Kidney (tissue), 22 donors: ENCODE measurements at regions of chr6 and their contacts with region 1.

Region 1: DNA sequence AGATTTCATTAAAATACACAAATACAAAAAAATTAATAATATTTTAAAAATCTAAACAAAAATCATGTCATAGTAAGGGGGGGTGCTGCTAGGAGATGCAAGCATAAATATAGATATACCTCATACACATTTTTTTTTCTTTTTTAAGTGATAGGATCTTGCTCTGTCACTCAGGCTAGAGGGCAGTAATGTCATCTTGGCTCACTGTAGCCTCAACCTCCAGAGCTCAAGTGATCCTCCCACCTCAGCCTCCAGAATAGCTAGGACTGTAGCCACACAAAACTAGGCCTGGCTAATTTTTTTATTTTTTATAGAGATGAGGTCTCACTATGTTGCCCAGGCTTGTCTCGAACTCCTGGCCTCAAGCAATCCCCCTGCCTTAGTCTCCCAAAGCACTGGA is 90.8 kb downstream of the HACE1 start:
- DNase-seq: no peak
- H3K4me3 ChIP-seq: no peak overlapping the region
- H3K27ac ChIP-seq: no peak overlapping the region
- H3K4me1 ChIP-seq: no peaks in the 10 kb centered on the region
- H3K27me3 ChIP-seq: no peaks in the 10 kb centered on the region
- CTCF ChIP-seq: no peak

Region 2: DNA sequence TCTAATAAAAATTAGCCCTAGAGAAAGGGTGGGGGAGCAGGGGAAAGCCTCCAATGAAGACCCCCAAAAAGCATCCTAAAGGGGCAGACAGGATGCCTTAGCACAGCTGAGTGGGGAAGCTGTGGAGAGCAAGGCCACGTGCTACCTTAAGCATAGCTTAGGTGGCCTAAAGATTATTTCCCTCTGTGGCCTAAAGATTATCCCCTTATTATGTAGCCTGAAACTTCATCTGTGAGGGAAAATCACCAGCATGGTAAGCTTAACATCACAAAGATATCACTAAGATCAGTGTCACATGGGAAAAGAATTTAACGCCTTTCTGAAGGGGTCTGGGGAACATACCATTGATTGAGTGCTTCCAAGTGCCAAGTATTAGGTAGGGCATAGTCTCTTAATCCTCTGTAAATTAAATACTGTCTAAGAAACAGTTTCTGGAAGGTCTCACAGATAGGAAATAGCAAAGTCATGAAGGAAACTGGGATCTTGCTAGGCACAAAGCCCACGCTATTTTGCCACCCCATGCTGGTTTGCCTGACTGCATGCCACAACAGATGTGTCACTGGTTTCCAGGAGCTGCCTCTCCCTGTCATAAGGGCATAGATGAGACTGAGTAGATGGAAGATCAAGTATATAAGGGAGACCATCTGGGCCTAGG is 79.2 kb before region 1 on chr6:
- intact Hi-C with region 1: loop called (anchors 10 kb)
- DNase-seq: no peak
- H3K4me3 ChIP-seq: no peak overlapping the region
- H3K27ac ChIP-seq: no peak overlapping the region
- H3K4me1 ChIP-seq: peaks cover 0 to 3% (median 0%) of the 10 kb centered on the region in 3 donors
- H3K27me3 ChIP-seq: no peaks in the 10 kb centered on the region
- CTCF ChIP-seq: no peak

Region 3: DNA sequence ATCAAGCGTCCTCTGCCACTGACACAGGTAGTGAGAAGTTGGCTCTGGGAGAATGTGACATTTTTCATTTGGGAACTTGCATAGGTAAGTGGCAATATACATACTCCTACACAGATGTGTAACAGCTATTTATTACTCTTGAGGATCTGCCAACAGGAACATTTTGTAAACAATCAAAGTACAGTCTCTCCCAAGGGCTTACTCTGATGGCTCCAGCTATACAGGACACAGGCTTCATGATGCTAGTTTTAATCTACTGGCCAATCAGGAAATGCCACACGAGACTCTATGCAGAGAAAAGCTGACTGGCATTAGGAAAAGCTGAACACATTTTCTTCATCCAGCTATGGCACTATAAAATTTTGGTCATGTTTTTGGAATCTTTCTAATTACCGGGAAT is 353.1 kb after region 1 on chr6:
- intact Hi-C with region 1: no loop called
- DNase-seq: no peak
- H3K4me3 ChIP-seq: no peak overlapping the region
- H3K27ac ChIP-seq: no peak overlapping the region
- H3K4me1 ChIP-seq: no peaks in the 10 kb centered on the region
- H3K27me3 ChIP-seq: no peaks in the 10 kb centered on the region
- CTCF ChIP-seq: no peak

Region 4: GRCh38 chr6:105449756-105450395 is 681.0 kb after region 1 on chr6:
- intact Hi-C with region 1: no loop called
- DNase-seq: no peak
- H3K4me3 ChIP-seq: no peak overlapping the region
- H3K27ac ChIP-seq: no peak overlapping the region
- H3K4me1 ChIP-seq: no peaks in the 10 kb centered on the region
- H3K27me3 ChIP-seq: no peaks in the 10 kb centered on the region
- CTCF ChIP-seq: no peak